Pancreas (tissue), 10 donors: ENCODE measurements at regions of chr18 and their contacts with region 1.

Region 1: GRCh38 chr18:616380-616995 is 19.7 kb downstream of the CLUL1 start:
- DNase-seq: peak in 1 of 6 donors; percentile 15
- ATAC-seq: peak; percentile 74 to 90 (median 88)
- H3K4me3 ChIP-seq: no peak overlapping the region
- H3K27ac ChIP-seq: peak overlapping the region in 1 of 4 donors; percentile 39
- H3K4me1 ChIP-seq: peaks cover 0 to 9% (median 5%) of the 10 kb centered on the region in 3 donors
- H3K27me3 ChIP-seq: no peaks in the 10 kb centered on the region
- CTCF ChIP-seq: peak in 3 of 4 donors; percentile 27 to 48 (median 39)

Region 2: GRCh38 chr18:293536-293935 is 323.0 kb before region 1 on chr18:
- intact Hi-C with region 1: loop called in 1 of 3 experiments (anchors 10 kb)
- DNase-seq: no peak
- ATAC-seq: peak in 3 of 4 donors; percentile 35 to 73 (median 66)
- H3K4me3 ChIP-seq: no peak overlapping the region
- H3K27ac ChIP-seq: no peak overlapping the region
- H3K4me1 ChIP-seq: no peaks in the 10 kb centered on the region
- H3K27me3 ChIP-seq: no peaks in the 10 kb centered on the region
- CTCF ChIP-seq: no peak

Region 3: DNA sequence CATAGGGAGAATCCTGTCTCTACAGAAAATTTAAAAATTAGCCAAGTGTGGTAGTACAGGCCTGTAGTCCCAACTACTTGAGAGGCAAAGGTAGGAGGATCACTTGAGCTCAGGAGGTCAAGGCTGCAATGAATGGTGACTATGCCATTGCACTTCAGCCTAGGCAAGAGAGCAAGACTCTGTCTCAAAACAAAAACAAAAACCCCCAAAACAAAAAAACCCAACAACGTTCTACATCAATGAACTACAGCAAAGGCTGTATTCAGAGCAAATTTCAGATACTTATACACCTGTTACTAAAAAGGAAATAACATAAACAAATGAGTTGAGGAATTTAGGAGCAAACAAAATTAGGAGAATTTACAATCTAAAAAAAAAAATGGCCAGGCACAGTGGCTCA is 172.9 kb after region 1 on chr18:
- intact Hi-C with region 1: no loop called
- DNase-seq: no peak
- ATAC-seq: no peak
- H3K4me3 ChIP-seq: no peak overlapping the region
- H3K27ac ChIP-seq: no peak overlapping the region
- H3K4me1 ChIP-seq: no peaks in the 10 kb centered on the region
- H3K27me3 ChIP-seq: no peaks in the 10 kb centered on the region
- CTCF ChIP-seq: no peak